AG04450 (cell line): ENCODE measurements at regions of chr10 and their contacts with region 1.

Region 1: GRCh38 chr10:89369156-89370105 is 8.4 kb upstream of the IFIT1B start:
- DNase-seq: no peak
- H3K4me3 ChIP-seq: no peak overlapping the region
- H3K27ac ChIP-seq: no peak overlapping the region
- H3K27me3 ChIP-seq: no peaks in the 10 kb centered on the region
- CTCF ChIP-seq: peak; percentile 69

Region 2: DNA sequence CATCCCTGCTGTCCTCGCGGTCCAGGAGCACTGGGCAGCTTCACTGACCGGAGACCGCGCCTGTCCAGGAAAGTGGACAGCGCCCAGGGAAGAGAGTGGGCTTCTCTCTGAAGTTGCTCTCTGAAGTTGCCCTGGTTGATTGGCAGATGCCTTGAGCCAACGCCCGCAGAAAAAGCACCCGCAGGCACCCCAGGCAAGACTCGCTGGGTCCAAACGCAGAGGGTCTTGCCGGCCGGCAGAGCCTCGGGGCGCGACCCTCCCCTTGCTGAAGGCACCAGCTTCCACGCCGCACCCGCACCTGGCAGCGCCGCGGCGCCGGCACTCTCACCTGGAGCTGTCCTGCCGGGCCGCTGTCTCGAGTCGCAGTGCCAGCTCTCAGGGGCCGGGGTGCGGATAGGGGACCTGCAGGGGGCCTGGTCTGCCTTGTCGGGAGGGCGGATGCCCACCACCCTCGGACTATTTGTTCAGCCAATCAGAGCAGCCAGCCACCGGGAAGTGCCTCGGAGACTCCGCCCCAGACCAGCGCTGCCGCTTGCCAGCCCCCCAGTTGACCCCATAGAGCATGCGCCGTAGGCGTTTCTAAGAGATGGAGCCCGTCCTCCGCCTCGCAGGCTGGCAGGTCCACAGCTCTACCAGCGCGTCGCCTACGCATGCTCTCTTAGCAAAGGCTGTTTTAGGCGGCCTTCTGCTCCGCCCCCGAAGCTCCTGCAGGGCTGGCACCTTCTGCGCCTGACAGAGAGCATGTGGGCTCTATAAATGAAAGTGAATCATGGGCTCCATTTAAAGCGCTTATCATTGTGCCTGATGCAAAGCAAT is 117.8 kb before region 1 on chr10 and contains the start of gene LIPA:
- CTCF ChIA-PET with region 1: interaction called, 20 read pairs
- POLR2A ChIA-PET with region 1: no interaction called
- DNase-seq: peak; percentile 92
- H3K4me3 ChIP-seq: peak within 1 kb of the TSS; percentile 93
- H3K27ac ChIP-seq: no peak within 1 kb of the TSS
- H3K27me3 ChIP-seq: no peaks in the 10 kb centered on the region
- CTCF ChIP-seq: no peak
- polyA plus RNA-seq, gene LIPA: 48.8 and 51.6 TPM in 2 replicates

Region 3: DNA sequence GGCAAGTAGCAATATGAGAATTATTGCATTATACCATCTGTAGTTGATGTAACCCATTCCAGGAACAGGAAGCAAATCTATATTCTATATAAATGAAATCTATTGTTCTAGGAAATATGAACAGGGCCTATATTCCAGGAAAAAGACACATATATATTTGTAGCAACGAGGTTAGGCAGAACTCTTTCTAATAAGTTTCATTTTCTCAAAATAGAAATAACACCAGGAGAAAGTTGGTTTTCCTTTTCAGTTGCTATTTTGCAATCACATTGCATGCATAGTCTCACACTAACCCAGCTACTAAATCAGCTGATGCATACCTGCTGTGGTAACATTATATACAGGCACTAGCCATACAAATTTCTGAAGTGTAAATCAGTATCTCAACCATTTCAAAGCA is 73.8 kb before region 1 on chr10:
- CTCF ChIA-PET with region 1: interaction called, 14 read pairs
- POLR2A ChIA-PET with region 1: no interaction called
- DNase-seq: peak; percentile 66
- H3K4me3 ChIP-seq: no peak overlapping the region
- H3K27ac ChIP-seq: no peak overlapping the region
- H3K27me3 ChIP-seq: no peaks in the 10 kb centered on the region
- CTCF ChIP-seq: no peak

Region 4: DNA sequence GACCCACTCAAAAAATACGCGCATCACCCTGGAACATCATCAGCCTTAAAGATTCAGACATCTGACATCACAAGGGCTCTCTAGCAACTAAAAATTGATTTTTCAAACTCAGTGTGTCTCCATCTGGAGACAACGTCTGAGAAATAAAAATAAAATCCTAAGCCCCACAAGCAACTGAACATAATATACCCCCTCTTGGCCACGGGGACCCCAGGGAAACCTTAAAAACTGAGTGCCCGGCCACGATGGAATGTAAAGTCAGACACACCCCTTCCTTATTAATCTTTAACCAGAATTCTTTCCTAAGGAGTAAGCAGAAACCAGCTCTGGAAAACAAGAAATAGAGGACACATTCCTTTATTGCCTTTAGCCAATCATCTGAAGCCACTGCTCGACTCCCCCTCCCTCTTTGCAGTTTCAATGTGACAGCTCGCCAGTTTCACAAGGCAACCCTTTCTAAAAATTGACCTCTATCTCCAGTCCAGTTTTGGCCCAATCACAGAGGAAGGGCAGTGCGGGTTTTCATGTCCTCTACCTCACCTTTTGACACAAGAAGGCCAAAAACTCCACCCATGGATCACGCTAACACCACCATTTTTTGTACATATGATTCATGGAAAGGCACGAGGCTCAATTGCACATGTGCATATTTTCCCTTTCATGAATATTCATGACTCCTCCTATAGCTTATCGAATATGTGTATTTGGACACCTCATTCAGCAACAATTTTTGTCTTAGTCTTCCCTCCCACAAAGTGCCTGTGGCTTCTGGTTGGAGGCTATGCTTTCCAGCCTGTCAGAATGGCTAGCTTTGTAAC is 17.4 kb before region 1 on chr10:
- CTCF ChIA-PET with region 1: interaction called, 15 read pairs
- POLR2A ChIA-PET with region 1: interaction called, 4 read pairs
- DNase-seq: peak; percentile 85
- H3K4me3 ChIP-seq: peak overlapping the region; percentile 35
- H3K27ac ChIP-seq: peak overlapping the region; percentile 85
- H3K27me3 ChIP-seq: no peaks in the 10 kb centered on the region
- CTCF ChIP-seq: no peak

Region 5: GRCh38 chr10:89419548-89419947 is 50.1 kb after region 1 on chr10:
- CTCF ChIA-PET with region 1: interaction called, 12 read pairs
- POLR2A ChIA-PET with region 1: no interaction called
- DNase-seq: no peak
- H3K4me3 ChIP-seq: no peak overlapping the region
- H3K27ac ChIP-seq: no peak overlapping the region
- H3K27me3 ChIP-seq: no peaks in the 10 kb centered on the region
- CTCF ChIP-seq: peak; percentile 63